HepG2 (cell line): ENCODE measurements at regions of chr12 and their contacts with region 1.

Region 1: DNA sequence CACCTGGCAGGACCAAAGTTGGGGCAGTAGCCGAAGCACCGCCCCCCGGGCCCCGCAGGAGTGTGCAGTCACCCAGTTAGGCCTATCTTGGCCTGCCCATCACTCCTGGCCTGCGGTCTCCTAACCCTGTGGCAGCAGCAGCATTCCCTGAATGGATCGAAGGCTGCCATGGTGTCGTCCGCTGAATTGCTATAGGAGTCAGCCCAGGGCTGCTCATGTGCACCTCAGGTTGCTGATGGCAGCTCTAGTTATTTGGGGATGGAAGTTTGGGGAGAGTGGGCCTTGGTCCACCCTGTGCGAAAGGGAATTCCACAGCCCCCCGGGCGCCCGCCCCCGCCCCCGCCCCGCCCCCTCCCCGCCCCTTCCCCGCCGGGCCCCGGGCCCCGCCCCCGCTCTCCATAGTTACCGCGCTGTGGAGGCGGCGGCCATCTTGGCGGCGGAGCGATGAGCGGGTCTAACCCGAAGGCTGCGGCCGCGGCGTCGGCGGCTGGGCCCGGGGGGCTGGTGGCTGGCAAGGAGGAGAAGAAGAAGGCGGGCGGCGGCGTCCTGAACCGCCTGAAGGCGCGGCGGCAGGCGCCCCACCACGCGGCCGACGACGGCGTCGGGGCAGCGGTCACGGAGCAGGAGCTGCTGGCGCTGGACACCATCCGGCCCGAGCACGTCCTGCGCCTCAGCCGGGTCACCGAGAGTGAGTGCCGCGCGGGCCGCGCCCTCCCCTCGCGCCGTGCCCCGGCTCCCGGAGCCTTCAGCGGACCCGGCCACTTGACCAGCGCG is at the start of gene UNC119B:
- DNase-seq: no peak
- ATAC-seq: peak; percentile 85
- H3K4me3 ChIP-seq: peak within 1 kb of the TSS; percentile 84 to 85 (median 84)
- H3K27ac ChIP-seq: peak within 1 kb of the TSS; percentile 59
- H3K4me1 ChIP-seq: peaks cover 34% of the 10 kb centered on the region
- H3K27me3 ChIP-seq: no peaks in the 10 kb centered on the region
- CTCF ChIP-seq: no peak
- EP300 ChIP-seq: no peak
- POLR2A ChIP-seq: peak; percentile 22 to 75; a peak in 3 of 4 replicates
- RAD21 ChIP-seq: no peak
- total RNA-seq, gene UNC119B: 19.6 and 30.7 TPM in 2 replicates

Region 2: DNA sequence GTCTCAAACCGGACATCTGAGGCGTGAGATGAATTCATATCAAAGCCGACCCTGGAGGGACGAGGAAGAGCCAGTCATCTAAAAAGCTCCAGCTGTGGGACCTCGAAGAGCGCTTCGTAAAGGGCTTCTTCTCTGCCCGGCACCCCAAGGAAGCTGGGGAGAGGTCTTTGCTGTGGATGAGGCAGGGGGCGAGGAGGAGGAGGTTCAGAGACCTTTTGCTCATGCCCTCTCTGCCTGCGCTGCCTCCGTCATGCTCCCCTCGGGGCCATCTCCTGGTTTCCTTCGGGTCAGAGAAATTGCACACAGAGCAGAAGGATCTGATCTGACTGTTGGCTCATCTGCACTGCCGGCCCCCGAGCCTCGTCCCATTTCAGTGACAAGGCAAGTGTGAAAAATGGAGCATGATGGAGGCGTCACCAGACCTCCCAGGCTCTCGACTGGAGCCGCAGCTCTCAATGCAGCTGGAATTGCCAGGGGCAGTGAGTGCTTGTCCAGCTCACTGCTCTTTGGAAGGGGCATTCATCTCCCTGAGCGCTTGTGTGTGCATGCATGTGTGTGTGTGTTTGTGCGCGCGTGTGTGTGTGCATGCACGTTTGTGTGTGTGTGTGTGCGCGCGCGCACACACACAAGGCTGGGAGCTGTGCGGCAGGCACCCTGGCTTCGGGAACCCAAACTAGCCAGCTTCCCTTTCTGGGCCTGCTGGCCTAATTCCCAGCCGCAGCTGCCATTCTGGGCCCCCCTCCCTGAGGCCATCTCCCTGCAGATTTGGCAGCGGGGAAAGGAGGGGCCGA is 60.6 kb before region 1 on chr12:
- CTCF ChIA-PET with region 1: interaction called, 26 read pairs
- POLR2A ChIA-PET with region 1: no interaction called
- in situ Hi-C with region 1: loop called (anchors 5 kb)
- intact Hi-C with region 1: loop called (anchors 1 kb)
- DNase-seq: no peak
- ATAC-seq: no peak
- H3K4me3 ChIP-seq: peak overlapping the region in 1 of 3 experiments; percentile 60; a peak in 1 of 6 replicates
- H3K27ac ChIP-seq: no peak overlapping the region
- H3K4me1 ChIP-seq: peaks cover 13% of the 10 kb centered on the region
- H3K27me3 ChIP-seq: peaks cover 5 to 73% of the 10 kb centered on the region in 2 experiments; a peak in 4 of 5 replicates
- CTCF ChIP-seq: no peak
- EP300 ChIP-seq: no peak
- POLR2A ChIP-seq: no peak
- RAD21 ChIP-seq: no peak

Region 3: DNA sequence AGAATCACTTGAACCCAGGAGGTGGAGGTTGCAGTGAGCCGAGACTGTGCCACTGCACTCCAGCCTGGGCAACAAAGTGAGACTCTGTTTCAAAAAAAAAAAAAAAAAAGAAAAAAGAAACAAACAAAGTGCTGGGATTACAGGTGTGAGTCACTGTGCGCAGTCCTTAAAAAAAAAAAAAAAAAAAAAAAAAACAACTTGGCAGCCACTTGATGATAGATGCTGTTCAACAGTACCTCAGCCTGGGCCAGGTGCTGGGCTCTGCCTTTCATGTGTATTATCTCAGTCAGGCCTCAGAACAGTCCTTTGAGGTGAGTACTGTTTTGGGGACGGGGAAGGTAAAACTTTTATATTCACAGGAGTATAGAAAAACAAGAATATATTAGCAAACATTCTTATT is 25.0 kb after region 1 on chr12:
- CTCF ChIA-PET with region 1: no interaction called
- POLR2A ChIA-PET with region 1: no interaction called
- in situ Hi-C with region 1: no loop called
- intact Hi-C with region 1: no loop called
- DNase-seq: no peak
- ATAC-seq: no peak
- H3K4me3 ChIP-seq: no peak overlapping the region
- H3K27ac ChIP-seq: no peak overlapping the region
- H3K4me1 ChIP-seq: no peaks in the 10 kb centered on the region
- H3K27me3 ChIP-seq: no peaks in the 10 kb centered on the region
- CTCF ChIP-seq: no peak
- EP300 ChIP-seq: no peak
- POLR2A ChIP-seq: no peak
- RAD21 ChIP-seq: no peak